Mammary epithelial cell (primary cell): ENCODE measurements at regions of chr5 and their contacts with region 1.

Region 1: DNA sequence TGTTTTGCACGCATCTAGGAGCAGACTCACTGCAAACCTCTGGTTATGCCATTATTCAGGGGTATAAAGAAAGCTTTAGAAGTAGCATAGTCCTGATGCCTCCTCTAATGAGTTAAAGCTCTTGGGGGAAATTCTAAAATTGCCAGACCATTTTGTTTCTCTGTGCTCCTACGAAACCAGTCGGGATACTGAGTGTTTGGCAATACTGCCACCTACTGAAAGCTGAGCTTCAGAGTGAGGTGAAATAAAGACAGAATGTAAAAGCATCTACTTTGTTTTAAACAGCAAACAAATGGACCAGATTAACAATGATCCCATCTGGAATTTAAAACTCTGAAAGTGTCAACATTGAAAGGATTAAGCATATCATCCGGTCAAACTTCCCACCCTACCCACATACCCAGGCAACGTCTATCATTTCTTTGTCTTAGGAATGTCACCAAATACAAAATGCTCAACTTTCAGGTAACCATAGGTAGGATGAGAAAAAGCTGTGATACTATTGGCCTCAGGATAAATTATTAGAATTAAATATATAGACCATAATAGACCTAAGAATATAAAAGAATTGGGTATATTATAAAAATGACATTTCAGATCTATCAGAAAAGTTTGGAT is 77.8 kb upstream of the SHISAL2B start:
- DNase-seq: peak; percentile 56
- H3K4me3 ChIP-seq: no peak overlapping the region
- H3K27ac ChIP-seq: no peak overlapping the region
- H3K4me1 ChIP-seq: no peaks in the 10 kb centered on the region
- H3K27me3 ChIP-seq: peaks cover 6% of the 10 kb centered on the region
- CTCF ChIP-seq: peak; percentile 69 to 87

Region 2: DNA sequence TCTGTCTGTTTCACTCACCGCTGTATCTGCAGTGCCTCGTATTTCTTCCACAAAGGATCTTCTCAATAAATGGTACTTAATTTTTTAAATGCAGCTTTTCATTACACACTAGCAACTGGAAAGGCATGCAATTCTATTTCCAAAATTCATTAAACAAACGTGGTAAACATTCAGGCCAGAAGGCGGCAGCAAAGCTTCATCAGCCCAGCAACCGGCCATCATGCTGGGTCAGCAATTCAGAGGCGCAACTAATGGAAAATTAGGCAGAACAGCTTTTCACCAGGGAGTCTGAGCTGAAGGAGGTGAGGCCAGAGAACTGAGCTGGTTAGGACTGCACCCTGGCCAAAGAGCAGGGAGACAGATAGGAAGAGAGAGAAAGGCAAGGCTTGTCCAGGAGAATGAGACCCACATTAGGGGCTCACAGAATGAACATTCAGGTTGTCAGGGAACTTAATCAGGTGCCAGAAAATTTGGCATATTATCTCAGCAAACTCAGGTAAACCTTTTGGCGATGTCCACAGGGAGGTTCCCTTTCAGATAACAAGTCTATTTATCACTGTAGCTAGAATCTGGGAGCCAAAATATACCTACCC is 464.5 kb before region 1 on chr5:
- CTCF ChIA-PET with region 1: no interaction called
- dilution Hi-C with region 1: no loop called
- in situ Hi-C with region 1: no loop called
- intact Hi-C with region 1: loop called (anchors 2 kb)
- DNase-seq: peak; percentile 28
- H3K4me3 ChIP-seq: no peak overlapping the region
- H3K27ac ChIP-seq: no peak overlapping the region
- H3K4me1 ChIP-seq: peaks cover 10% of the 10 kb centered on the region
- H3K27me3 ChIP-seq: no peaks in the 10 kb centered on the region
- CTCF ChIP-seq: peak; percentile 77 to 84

Region 3: DNA sequence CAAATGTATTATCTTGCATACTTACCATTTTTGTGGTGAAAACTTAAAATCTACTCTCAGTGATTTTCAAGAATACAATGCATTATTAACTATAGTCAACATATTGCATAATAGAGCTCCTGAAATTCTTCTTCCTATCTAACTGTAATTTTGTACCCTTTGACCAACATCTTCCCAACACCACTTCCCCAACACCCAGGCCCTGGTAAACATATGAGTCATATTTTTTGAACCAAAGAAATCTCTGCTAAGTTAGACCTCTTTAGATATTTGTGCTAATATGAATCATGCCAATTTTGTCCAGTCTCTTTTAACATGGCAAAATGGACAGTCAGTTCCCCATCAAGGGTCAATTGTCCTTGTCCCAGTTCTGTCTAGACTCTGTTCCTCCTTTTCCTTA is 125.2 kb before region 1 on chr5:
- CTCF ChIA-PET with region 1: no interaction called
- dilution Hi-C with region 1: no loop called
- in situ Hi-C with region 1: no loop called
- intact Hi-C with region 1: no loop called
- DNase-seq: no peak
- H3K4me3 ChIP-seq: no peak overlapping the region
- H3K27ac ChIP-seq: no peak overlapping the region
- H3K4me1 ChIP-seq: no peaks in the 10 kb centered on the region
- H3K27me3 ChIP-seq: no peaks in the 10 kb centered on the region
- CTCF ChIP-seq: no peak